OCI-LY7 (cell line): ENCODE measurements at regions of chr3 and their contacts with region 1.

Region 1: DNA sequence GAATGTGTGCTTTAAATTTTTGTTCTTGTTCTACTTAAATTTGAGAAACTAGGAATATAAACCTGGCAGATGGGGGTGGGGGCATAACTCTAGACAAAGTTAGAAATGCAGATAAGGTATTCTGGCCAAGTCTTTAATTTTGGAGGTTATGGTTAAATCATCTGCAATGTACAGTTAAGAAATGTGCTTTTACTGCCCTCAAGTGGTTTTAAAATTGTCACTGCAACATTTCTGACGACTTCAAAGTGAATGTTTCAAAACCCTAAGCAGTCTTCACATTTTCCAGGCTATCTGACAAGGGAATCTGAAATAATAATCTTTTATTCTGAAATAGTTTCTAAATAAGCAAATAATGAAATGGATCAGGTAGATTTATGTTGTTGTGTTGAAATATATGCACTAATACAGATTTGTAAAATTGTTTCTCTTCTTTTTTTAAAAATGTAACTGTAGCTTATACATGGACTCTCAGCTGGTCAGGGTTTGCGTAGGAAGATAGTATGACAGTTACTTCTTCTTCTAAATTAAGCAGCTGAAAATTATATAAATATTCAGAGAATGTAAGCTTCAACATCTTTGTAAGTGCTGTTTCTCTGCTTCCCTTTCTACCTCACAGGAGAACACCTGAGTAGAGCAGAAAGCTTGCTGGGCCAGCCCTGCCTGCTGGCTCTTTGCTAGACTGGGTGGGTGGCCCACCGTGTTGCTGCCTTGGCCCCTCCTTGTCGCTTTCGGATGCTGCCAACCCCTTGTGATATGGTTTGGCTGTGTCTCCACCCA is 45.0 kb downstream of the SUCNR1 start:
- DNase-seq: peak; percentile 44
- H3K4me3 ChIP-seq: no peak overlapping the region
- H3K27ac ChIP-seq: no peak overlapping the region
- H3K4me1 ChIP-seq: no peaks in the 10 kb centered on the region
- CTCF ChIP-seq: peak; percentile 86

Region 2: DNA sequence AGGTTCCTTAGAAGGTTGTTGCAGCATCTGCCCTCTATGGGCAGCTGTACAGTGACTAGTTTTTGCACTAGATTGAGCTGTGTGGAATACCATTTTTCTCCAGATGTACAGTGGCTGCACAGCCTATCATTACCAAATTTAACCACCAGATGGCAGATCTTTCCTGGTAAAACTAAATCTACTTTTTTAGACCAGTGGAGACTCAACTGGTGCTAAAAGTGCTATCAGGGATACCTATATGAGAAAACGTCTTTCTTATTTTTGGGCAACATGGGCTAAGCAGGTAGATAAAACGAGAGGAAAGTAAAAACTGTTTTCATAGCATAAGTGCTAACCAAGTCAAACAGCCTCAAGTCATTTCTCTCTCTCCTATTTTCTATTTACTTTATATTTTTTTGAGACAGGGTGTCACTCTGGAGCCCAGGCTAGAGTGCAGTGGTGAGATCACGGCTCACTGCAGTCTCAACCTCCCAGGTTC is 478.8 kb before region 1 on chr3:
- CTCF ChIA-PET with region 1: no interaction called
- POLR2A ChIA-PET with region 1: no interaction called
- intact Hi-C with region 1: loop called (anchors 10 kb)
- DNase-seq: peak; percentile 54
- H3K4me3 ChIP-seq: no peak overlapping the region
- H3K27ac ChIP-seq: no peak overlapping the region
- H3K4me1 ChIP-seq: no peaks in the 10 kb centered on the region
- CTCF ChIP-seq: peak; percentile 84

Region 3: DNA sequence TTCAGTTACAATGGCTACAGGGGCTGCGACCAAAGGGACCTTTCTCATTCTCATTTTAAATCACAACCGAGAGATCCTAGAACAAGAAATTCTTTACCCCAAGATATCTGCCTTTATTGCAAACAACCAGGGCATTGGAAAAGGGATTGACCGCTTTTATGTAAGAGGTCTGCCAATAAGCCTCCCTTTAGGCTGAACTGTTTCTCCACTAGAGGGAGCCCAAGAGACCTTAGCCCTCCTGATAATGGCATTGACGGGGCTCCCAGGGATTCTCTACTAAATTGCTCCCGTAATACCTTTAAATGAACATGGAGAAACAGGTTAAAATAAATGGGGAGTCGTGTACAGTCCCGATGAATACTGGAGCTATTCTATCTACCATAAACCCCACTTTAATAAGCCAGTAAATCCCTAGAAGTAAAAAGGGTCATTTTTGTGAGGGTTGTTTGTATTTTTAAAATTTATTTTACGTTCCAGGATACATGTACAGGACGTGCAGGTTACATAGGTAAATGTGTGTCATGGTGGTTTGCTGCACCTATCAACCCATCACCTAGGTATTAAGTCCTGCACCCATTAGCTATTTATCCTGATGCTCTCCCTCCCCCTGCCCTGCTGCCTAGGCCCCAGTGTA is 450.0 kb before region 1 on chr3:
- CTCF ChIA-PET with region 1: no interaction called
- POLR2A ChIA-PET with region 1: no interaction called
- intact Hi-C with region 1: loop called (anchors 10 kb)
- DNase-seq: peak; percentile 60
- H3K4me3 ChIP-seq: no peak overlapping the region
- H3K27ac ChIP-seq: no peak overlapping the region
- H3K4me1 ChIP-seq: no peaks in the 10 kb centered on the region
- CTCF ChIP-seq: peak; percentile 97